Activated B cell treated with CpG ODN at 0.5 μM for 24 hours (primary cell): ENCODE measurements at regions of chr2 and their contacts with region 1.

Region 1: DNA sequence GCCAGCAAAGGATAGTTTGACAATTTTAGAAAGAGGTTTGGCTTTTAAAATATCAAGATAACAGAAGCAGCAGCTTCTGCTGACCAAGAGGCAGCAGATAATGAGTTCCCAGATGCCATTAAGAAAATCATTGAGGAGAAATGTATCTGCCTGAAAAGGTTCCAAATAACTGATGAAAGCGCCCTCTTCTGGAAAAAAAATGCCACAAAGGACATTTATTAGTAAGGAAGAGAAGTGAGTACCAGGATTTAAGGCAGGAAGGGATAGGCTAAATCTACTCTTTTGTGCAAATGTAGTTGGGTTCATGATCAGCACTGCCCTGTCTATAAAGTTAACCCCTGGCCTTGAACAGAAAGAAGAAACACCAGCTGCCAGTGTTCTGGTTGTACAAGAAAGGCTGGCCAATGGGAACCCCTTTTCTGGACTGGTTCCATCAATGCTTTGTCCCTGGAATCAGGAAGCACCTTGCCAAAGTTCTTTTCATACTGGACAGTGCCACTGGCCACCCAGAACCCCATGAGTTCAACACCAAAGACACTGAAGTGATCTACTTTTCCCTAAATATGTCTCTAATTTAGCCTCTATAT is 40.6 kb downstream of the DHX57 start:
- DNase-seq: no peak
- ATAC-seq: no peak
- H3K4me3 Mint-ChIP-seq: no peak overlapping the region
- H3K27ac Mint-ChIP-seq: peak overlapping the region; percentile 93
- H3K4me1 Mint-ChIP-seq: peaks cover 40% of the 10 kb centered on the region
- H3K27me3 Mint-ChIP-seq: no peaks in the 10 kb centered on the region
- CTCF ChIP-seq: no peak

Region 2: DNA sequence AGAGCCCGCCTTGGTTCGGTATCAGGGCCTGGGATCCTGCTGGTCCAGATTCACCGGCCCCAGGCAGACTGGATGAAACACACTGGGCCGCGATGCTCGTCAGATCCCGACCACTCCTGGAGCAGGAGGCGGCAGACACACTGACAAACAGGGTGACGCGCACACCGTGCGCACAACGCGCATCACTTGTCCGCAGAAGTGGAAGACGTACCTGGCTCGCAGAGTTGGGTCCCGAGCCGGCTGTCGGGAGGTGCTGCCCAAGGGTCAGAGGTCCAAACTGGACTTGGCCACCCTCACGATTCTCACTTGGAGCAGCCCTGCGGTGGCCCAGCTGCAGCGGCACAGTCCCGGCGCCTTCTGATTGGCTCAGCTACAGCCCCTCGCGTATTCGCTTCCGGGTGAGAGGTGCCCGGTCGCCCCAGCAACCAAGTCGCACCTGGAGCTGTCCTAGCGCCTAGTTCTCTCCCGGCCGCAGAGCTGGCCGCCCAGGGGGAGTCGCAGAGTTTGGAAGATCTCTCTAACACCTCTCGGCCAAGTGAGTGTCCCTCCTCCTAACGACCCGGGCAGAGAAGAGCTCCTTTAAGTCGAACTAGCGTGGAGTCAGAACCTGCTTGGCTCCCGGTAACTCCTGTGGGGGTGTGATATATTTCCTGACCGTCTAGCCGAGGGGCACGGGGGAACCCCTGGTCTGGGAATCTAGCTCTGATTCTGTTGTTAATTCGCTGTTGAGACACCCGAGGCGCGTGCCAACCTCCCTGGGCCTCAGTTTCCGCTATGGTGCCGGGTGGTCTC is 40.7 kb after region 1 on chr2 and contains the starts of genes DHX57 and MORN2:
- CTCF ChIA-PET with region 1: no interaction called
- POLR2A ChIA-PET with region 1: no interaction called
- intact Hi-C with region 1: loop called (anchors 5 kb)
- DNase-seq: peak; percentile 69
- ATAC-seq: peak; percentile 98
- H3K4me3 Mint-ChIP-seq: peak within 1 kb of the TSS; percentile 93
- H3K27ac Mint-ChIP-seq: peak within 1 kb of the TSS; percentile 79
- H3K4me1 Mint-ChIP-seq: peaks cover 22% of the 10 kb centered on the region
- H3K27me3 Mint-ChIP-seq: no peaks in the 10 kb centered on the region
- CTCF ChIP-seq: no peak
- total RNA-seq, gene DHX57: 20.4 and 21.5 TPM in 2 replicates
- total RNA-seq, gene MORN2: 4.1 and 4.8 TPM in 2 replicates

Region 3: DNA sequence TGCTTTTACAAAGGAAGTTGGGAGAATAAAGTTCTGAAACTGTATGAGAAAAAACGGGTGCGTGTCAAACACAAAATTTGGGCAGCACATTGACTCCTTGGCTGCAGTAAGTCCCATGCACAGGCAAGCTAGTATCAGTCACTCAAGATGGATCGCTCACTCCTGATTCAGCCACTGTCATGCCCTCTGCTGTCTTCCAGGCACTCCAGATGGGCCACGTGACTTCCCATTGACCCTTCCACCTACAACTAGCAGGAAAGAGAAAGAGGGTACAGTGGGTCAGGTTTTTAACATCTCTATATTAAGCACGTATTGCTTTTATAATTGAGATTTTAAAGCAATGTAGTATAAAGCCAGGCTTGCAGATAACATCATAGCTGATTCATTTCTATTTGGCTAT is 63.1 kb after region 1 on chr2:
- CTCF ChIA-PET with region 1: no interaction called
- POLR2A ChIA-PET with region 1: no interaction called
- intact Hi-C with region 1: no loop called
- DNase-seq: no peak
- ATAC-seq: no peak
- H3K4me3 Mint-ChIP-seq: no peak overlapping the region
- H3K27ac Mint-ChIP-seq: no peak overlapping the region
- H3K4me1 Mint-ChIP-seq: no peaks in the 10 kb centered on the region
- H3K27me3 Mint-ChIP-seq: peaks cover 2% of the 10 kb centered on the region
- CTCF ChIP-seq: no peak